ENCODE measurements at regions of chr16 and their contacts with region 1.

Region 1: DNA sequence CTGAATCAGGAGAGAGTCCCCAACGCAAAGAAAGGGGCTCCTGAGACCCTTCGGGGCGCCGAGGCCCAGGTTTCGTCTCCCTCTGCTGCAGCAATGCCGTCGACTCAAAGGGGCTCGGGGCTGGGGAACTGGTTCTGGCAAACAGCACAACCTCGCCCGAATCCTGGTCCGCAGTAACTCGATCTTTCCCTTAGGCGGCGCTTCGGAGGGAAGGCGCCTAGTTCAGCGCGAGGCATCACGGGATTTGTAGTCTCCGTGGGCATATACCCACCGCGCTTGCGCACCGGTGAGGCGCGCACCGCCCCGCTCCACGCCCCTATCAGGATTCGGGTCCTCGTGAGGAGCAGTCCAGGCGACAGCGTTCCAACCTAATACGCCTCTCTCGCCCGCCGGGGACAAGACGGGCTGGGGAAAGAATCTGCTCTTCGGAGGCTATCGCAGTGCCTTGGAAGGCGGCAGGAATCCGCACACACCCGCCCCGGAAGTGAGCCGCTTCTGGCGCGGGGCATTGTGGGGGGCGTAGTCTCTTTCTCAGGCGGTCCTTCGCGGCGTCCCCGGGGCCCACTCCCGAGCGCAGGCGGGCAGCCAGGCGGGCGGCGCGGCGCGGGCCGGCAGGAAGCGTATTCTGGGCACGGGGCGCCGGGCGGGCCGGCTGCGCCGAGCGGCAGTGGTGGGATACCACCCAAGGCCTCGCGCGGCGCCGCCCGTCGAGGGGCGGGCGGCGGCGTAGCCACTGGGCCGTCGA is at the start of gene THAP11:
- DNase-seq: peak; percentile 97
- H3K4me3 Mint-ChIP-seq: peak within 1 kb of the TSS; percentile 91
- H3K27ac Mint-ChIP-seq: peak within 1 kb of the TSS; percentile 98
- H3K4me1 Mint-ChIP-seq: peaks cover 33% of the 10 kb centered on the region
- H3K27me3 Mint-ChIP-seq: no peaks in the 10 kb centered on the region
- total RNA-seq, gene THAP11: 19.9 to 20.6 TPM

Region 2: DNA sequence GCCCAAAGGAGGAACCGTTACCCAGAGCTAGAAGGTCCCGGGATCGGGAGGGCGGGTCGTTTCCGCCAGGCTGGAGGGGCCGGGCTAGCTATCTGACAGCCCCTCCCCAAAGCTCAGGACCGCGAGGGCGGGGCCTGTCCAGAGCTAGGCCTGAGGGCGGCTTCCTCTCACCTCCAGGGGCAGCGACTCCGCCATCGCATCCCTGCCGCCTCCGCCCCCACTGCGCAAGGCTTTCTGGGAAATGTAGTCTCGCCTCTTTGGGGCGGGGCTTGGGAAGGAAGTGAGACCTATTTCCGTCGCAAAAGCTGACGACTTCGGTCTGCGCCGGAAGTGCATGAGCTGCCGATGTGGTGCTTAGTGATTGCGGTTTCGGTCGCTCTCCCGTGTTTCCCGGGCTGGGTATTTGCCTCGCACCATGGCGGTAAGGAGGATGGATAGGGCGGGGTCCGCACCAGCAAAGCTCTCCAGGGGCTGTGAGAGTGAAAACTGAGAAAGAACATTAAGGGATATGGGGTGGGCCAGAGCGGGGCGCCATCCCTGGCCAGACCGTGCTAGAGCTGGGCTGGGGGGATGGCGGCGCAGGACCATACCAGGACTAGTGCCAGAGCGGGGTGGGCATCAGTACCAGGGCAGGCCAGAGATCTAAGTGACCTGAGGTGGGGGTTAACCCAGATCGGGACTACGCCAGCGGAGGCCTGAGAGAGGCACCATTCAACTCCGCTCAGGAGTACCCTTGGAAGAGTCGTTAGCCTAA is 615.0 kb before region 1 on chr16 and contains the start of gene TMEM208:
- CTCF ChIA-PET with region 1: no interaction called
- intact Hi-C with region 1: loop called (anchors 1 kb)
- DNase-seq: peak; percentile 99
- H3K4me3 Mint-ChIP-seq: peak within 1 kb of the TSS; percentile 100
- H3K27ac Mint-ChIP-seq: peak within 1 kb of the TSS; percentile 96
- H3K4me1 Mint-ChIP-seq: peaks cover 51% of the 10 kb centered on the region
- H3K27me3 Mint-ChIP-seq: no peaks in the 10 kb centered on the region
- total RNA-seq, gene TMEM208: 24.6 to 29.4 TPM

Region 3: DNA sequence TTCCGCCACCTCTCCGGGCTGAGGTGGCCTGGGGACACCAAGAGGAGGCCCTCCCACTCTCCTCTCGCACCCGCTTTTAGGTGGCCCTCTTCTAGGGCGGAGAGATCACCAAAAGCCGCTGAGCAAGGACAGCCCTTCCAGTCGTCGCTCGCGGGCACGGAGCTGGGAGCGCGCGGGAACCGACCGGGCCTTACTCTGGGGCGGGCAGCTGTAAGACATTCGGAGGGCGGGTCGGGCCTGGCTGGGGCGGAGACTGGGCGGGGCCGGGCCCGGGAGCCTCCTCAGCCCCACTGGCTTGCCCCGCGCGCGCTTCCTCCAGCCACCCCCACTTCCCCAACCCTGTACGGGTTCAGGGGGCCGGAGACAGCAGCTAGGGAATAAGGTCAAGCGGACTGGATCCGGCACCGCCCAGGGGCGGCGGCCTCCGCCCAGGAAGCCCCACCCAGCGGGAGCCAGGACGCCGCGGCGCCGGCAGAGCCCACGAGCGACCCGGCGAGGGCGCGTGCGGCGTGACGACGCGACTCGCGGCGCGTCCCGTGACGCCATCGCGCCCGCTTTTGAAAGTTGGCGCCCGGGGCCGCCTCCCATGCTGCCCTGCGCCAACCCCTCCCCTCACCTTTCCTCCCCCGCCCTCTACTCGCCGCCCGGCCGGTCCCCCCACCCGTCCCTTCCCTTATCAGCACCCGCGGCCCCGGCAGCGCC is 280.0 kb before region 1 on chr16:
- CTCF ChIA-PET with region 1: no interaction called
- intact Hi-C with region 1: loop called (anchors 1 kb)
- DNase-seq: peak; percentile 98
- H3K4me3 Mint-ChIP-seq: peak overlapping the region; percentile 78
- H3K27ac Mint-ChIP-seq: peak overlapping the region; percentile 86
- H3K4me1 Mint-ChIP-seq: peaks cover 45% of the 10 kb centered on the region
- H3K27me3 Mint-ChIP-seq: no peaks in the 10 kb centered on the region

Region 4: GRCh38 chr16:67816240-67817031 is 25.5 kb before region 1 on chr16:
- CTCF ChIA-PET with region 1: interaction called, 58 read pairs
- intact Hi-C with region 1: loop called (anchors 1 kb)
- DNase-seq: peak; percentile 93
- H3K4me3 Mint-ChIP-seq: no peak overlapping the region
- H3K27ac Mint-ChIP-seq: no peak overlapping the region
- H3K4me1 Mint-ChIP-seq: peaks cover 4% of the 10 kb centered on the region
- H3K27me3 Mint-ChIP-seq: no peaks in the 10 kb centered on the region

Region 5: DNA sequence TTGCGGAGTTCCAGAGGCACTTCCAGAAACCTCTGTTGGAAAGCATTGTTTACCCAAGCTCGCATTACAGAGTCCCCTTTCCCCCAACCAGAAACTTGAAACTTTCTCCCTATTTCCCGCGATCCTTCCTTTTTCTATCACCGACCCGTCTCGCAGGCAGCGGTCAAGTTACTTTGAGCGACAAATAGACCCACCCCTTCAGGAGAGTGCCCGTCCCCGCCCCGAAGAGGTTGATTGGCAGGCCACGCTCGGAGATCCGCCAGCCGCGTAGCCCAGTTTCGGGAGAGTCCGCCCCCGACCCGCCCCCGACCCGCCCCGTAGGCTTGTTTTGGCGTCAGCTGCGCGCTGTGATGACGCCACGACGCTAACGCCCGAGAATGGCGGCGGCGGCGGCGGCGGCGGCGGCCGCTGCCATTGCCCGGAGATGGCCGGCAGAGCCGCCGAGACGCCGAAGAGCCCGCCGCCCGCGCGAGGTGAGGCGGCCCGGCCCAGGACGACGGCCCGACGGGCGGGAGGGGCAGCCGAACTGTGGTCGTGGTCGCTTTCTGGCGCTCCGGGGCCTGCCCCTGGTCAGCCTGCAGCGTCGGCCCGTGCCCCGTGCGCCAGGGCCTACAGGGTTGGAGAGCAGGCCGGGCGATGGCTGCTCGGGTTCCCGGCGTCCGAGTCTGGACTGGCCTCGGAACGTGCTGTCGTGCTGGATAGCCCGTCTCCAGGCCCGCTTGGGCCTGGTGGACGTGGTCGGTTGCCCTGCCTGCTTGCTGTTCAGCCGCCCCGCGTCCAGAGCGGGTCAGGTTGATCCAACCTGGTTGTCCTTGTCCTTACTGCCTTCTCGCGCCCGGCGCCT is 51.2 kb after region 1 on chr16 and contains the start of gene PSKH1:
- CTCF ChIA-PET with region 1: no interaction called
- intact Hi-C with region 1: loop called (anchors 1 kb)
- DNase-seq: peak; percentile 98
- H3K4me3 Mint-ChIP-seq: peak within 1 kb of the TSS; percentile 79
- H3K27ac Mint-ChIP-seq: peak within 1 kb of the TSS; percentile 82
- H3K4me1 Mint-ChIP-seq: peaks cover 39% of the 10 kb centered on the region
- H3K27me3 Mint-ChIP-seq: no peaks in the 10 kb centered on the region
- total RNA-seq, gene PSKH1: 7.1 to 8.0 TPM

Region 6: DNA sequence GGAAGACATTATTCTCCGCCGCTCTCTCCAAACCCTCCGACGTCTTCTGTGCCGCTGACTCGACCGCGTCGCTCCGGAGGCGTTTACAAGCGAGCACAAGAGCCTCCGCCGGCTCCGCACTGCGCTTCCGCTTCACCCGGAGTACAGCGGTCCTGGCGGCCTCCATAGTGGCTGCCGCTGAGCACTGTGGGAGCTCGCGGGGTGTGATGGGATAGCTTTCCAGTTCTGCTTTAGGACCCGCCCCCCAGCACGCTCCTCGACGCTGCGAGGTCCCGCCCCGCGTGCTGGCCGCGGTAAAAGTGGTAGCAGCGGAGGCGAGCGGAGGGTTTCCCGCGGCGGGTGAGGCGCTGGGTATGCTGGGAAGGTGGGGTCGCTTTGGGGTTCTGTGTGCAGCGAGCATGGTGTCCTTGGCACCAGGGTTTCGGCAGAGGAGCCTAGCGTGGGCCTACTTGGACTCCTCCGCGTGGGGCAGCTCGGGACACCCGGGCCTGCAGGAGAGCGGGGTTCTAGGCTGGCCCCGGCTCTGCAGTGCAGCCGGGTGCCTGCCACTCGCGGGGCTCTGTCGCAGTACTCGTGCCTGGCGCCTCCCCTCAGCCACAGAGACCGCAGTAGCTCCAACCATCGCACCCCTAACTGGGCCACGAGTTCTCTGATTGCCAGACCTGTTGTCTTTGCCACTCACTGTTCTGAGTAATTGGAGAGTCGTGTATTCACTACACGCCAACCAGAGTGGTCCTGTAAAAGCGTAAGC is 469.0 kb after region 1 on chr16 and contains the starts of genes PRMT7 and SLC7A6OS:
- CTCF ChIA-PET with region 1: no interaction called
- intact Hi-C with region 1: loop called (anchors 1 kb)
- DNase-seq: peak; percentile 96
- H3K4me3 Mint-ChIP-seq: peak within 1 kb of the TSS; percentile 94
- H3K27ac Mint-ChIP-seq: peak within 1 kb of the TSS; percentile 89
- H3K4me1 Mint-ChIP-seq: peaks cover 46% of the 10 kb centered on the region
- H3K27me3 Mint-ChIP-seq: no peaks in the 10 kb centered on the region
- total RNA-seq, gene PRMT7: 51.6 to 52.4 TPM
- total RNA-seq, gene SLC7A6OS: 23.0 to 26.4 TPM

Measured in activated naive CD4-positive, alpha-beta T cell treated with anti-CD3 and anti-CD28 coated beads for 36 hours (primary cell).